Posterior cingulate gyrus (tissue), 11 donors: ENCODE measurements at regions of chr12 and their contacts with region 1.

Region 1: GRCh38 chr12:51865757-51866270 is 17.3 kb upstream of the FIGNL2 start:
- DNase-seq: peak in 2 of 10 donors; percentile 62 to 67

Region 2: GRCh38 chr12:51798501-51798900 is 67.3 kb before region 1 on chr12:
- intact Hi-C with region 1: no loop called
- DNase-seq: no peak

Region 3: DNA sequence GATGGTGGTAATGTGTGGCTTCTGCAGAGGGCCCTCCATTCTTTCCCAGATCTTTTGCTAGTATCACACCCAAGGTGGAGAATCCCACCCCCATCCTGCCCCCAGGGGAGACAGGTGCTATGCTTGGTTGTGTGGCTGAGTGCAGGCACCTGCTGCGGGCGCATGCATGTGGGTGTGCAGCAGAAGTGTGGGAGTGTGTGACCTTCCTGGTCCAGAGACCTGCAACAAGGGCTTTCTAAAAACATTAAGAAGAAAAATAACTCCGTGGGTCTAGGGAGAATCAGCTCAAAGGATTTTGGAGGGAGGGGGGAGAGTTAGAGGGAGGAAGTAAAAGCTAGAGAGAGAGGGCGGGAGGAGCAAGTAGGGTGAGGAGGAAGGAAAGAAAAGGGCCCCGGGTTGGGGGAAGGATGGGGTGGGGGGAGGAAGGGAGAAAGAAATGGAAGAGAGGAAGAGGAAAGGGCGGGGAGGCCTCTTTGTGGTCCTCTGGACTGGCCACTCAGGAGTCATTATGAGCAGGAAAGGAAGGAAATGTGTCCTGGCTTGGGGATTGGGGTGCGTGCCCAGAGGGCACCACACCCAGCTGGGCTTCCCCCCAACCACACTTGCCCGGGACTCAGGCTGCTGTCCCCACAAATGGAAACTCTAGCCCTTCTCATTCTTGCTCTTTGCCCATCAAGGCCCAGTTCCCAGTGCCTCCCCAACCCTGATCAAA is 14.2 kb before region 1 on chr12:
- intact Hi-C with region 1: loop called (anchors 1 kb)
- DNase-seq: no peak